Posterior vena cava (tissue), 2 donors: ENCODE measurements at regions of chr10 and their contacts with region 1.

Region 1: GRCh38 chr10:511101-511848 is 178.2 kb downstream of the DIP2C start:
- DNase-seq: peak; percentile 96

Region 2: DNA sequence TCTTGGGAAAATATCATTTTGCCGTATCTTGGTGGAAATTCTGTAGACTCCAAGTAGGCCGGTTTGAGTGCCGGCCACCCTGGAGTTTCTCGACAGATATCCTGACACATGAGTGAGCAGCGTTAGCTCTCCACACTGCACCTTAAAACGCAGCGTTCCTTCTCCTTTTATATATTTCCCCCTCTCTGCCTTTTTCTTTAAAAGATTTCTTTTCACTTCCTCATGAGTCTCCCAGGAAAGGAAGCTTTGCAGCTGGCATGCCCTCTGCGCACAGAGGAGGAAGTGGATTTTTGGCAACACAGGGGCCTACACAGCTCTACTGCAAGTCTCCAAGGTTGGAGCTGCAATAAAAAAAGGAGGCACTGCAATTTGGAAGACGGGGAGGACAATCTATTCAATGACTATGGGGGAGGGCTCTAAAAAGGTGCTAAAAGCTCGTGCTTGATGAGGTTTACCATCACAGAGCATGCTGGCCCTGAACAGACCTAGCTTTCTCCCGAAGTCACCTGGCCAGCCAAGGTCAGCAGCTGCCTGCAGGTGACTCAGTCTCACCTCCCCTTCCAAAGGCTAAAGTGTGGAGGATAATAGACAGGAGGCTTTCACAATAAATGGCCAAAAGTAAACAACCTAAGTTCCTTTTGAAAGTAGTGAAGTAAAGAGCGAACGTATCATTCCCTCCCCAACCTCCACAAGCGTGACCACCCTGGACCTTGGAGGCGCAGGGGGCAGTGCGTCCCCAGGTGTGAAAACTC is 123.2 kb before region 1 on chr10:
- intact Hi-C with region 1: no loop called
- DNase-seq: no peak

Region 3: DNA sequence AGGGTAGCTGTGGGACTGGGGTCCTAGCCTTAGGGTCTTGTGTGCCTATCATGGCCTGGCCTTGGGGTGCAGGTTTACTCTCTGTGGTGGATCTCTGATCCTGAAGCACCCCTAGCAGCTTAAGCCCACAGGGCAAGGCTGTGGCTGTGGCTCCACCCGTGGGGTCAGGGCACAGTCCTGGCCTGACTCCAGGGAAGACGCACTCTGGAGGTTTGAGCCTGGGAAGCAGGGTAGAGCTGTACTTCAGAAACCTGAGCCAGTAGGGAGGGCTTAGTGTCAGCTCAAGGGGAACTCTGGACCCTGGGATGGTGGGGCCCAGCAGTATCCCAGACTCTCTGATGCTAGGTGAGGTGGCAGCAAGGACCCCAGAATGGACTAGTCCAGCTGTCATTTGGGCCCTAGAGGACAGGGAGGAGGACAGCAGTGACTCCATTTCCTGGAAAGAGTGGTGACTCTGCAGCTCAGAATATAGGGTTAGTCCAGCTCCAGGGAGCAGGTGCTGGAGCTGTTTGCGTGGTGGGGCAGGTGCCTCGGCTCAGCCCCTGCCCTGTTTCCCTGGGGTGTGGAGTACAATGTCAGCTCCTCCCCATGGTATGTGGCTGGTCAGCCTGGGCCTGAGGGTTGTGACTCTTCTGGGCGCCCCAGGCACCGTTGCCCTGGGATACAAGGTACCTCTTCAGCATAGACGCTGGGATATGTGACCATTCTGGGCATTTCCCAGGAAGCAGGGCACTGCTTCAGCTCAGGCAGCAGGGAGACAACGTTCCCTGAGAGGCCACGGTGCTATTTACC is 492.8 kb after region 1 on chr10:
- intact Hi-C with region 1: loop called in 1 of 2 experiments (anchors 5 kb)
- DNase-seq: no peak